Left cardiac atrium (tissue), 4 donors: ENCODE measurements at regions of chr1 and their contacts with region 1.

Region 1: DNA sequence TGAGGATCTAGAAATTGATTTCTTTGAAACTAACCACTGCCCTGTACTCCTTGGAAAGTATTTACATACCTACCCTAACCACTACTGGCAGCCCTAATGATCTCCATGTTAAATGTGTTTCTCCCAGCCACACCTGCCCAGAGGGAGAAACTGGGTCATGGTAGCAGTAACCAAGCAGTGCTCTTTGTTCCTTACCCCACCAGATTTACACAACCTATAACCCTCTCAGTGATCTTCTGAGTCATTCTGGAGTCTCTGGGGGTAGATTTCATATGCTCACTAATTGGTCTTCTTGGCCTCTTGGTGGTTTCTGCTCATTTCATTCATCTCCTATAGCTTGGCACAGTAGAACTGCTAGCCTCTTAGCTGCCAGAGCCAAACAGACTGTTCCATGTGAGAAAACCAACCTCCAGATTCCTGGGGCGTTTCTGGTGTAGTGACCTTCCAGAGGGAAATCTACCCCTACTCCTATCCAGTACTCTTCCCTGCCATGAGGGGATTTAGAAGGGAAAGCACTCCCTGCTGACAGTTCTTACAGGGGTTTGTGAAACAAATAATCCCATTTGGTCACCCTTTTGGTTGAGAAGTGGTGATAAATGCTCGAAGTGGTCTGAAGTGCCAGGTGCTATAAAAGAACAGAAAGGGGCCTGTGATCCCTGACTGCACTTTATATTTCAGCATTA is 36.2 kb upstream of the LRIG2 start:
- DNase-seq: no peak
- ATAC-seq: no peak

Region 2: GRCh38 chr1:112955781-112956543 is 80.8 kb before region 1 on chr1 and contains the start of gene SLC16A1:
- intact Hi-C with region 1: loop called in 1 of 2 experiments (anchors 10 kb)
- DNase-seq: peak; percentile 95
- ATAC-seq: peak; percentile 94 to 97
- total RNA-seq, gene SLC16A1: 54.0 to 80.0 TPM